ENCODE measurements at regions of chr2 and their contacts with region 1.

Region 1: GRCh38 chr2:152717228-152718075 is at the start of gene PRPF40A:
- DNase-seq: peak; percentile 98
- H3K4me3 Mint-ChIP-seq: peak within 1 kb of the TSS; percentile 100
- H3K27ac Mint-ChIP-seq: peak within 1 kb of the TSS; percentile 97
- H3K4me1 Mint-ChIP-seq: peaks cover 56% of the 10 kb centered on the region
- H3K27me3 Mint-ChIP-seq: peaks cover 1% of the 10 kb centered on the region
- total RNA-seq, gene PRPF40A: 152 and 172 TPM in 2 replicates

Region 2: DNA sequence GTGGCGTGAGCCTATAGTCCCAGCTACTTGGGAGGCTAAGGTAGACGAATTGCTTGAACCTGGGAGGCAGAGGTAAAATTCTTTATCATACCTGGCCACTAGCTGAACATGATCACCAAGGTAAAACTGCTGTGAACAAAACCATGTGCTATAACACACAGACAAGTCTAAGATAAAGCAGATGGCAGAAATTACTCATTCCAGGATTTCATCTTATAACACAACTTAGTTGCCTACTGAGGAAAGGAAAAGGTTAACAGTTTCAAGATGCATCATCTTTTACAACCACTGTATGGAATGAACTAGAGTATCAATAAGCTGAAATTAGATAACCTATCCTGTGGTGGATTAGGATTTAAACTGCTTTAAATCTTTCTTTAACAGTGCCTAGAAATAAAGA is 897.5 kb before region 1 on chr2:
- intact Hi-C with region 1: loop called (anchors 2 kb)
- DNase-seq: no peak
- H3K4me3 Mint-ChIP-seq: no peak overlapping the region
- H3K27ac Mint-ChIP-seq: peak overlapping the region; percentile 68
- H3K4me1 Mint-ChIP-seq: peaks cover 51% of the 10 kb centered on the region
- H3K27me3 Mint-ChIP-seq: no peaks in the 10 kb centered on the region

Region 3: DNA sequence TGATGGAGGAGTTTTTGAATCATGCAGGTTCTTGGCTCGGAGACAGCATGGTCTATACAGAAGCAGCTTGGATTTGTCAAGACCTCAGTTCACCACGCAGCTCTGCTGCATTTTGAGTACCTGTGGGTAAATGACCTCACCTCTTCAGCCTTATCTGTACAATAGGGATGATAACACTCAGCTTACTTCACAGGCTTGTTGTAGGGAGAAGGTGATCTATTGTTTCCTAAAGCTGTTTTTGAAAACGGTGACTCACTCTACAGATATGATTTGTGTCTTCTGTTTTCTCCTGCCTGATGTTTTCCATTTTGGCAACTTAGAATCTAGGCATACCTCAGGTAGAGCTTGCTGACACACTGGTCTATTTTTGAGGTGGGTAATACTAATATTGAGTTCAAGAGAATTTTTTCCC is 302.2 kb before region 1 on chr2:
- intact Hi-C with region 1: loop called (anchors 2 kb)
- DNase-seq: no peak
- H3K4me3 Mint-ChIP-seq: peak overlapping the region; percentile 16
- H3K27ac Mint-ChIP-seq: peak overlapping the region; percentile 77
- H3K4me1 Mint-ChIP-seq: peaks cover 41% of the 10 kb centered on the region
- H3K27me3 Mint-ChIP-seq: no peaks in the 10 kb centered on the region

Region 4: DNA sequence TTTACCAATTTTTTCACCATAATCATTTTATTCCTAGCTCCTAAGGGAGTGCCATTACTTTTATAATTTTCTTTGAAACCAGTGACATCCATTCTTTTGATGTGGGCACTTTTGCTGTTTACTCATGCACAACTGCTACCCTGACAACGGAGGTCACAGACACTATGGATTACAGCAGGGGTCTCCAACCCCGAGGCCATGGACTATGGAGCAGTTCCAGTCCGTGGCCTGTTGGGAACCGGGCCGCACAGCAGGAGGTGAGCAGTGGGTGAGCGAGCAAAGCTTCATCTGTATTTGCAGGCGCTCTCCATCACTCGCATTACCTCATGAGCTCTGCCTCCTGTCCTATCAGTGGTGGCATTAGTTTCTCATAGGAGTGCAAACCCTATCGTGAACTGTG is 34.8 kb before region 1 on chr2:
- intact Hi-C with region 1: loop called (anchors 5 kb)
- DNase-seq: no peak
- H3K4me3 Mint-ChIP-seq: no peak overlapping the region
- H3K27ac Mint-ChIP-seq: no peak overlapping the region
- H3K4me1 Mint-ChIP-seq: peaks cover 31% of the 10 kb centered on the region
- H3K27me3 Mint-ChIP-seq: no peaks in the 10 kb centered on the region

Region 5: GRCh38 chr2:152730591-152731303 is 13.3 kb after region 1 on chr2:
- intact Hi-C with region 1: loop called (anchors 1 kb)
- DNase-seq: peak; percentile 29
- H3K4me3 Mint-ChIP-seq: peak overlapping the region; percentile 6
- H3K27ac Mint-ChIP-seq: no peak overlapping the region
- H3K4me1 Mint-ChIP-seq: peaks cover 28% of the 10 kb centered on the region
- H3K27me3 Mint-ChIP-seq: no peaks in the 10 kb centered on the region

Region 6: DNA sequence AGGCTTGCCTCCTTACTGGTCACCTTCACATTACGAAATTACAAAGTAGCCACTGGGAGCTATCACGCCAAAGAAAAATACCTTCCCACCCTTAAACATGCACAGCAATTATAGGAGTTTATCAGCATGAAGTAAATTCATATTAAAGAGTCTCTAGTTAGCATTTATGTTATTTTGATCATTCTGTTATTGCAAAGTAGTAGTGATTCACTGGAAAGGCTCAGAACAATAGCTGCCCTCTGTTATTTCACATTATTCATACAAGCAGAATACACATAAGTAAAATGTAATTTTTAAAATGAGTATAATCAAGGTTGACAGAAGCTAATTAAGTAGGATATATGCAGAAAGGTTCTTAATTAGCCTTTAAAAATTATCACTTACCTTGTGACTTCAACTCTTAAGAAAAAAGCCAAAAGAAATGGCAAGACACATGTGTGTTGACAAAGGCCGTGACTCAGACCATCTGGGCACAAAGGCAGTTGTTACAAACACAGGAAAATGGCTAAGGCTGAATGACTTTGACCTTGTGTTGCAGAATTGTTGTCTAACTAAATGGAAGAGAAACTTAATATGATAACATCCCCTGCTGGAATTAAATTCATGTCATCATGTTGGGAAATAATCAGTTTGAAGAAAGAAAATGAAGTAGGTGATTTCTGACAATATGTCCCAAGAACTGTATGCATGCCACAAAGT is 109.3 kb after region 1 on chr2:
- intact Hi-C with region 1: no loop called
- DNase-seq: no peak
- H3K4me3 Mint-ChIP-seq: no peak overlapping the region
- H3K27ac Mint-ChIP-seq: no peak overlapping the region
- H3K4me1 Mint-ChIP-seq: no peaks in the 10 kb centered on the region
- H3K27me3 Mint-ChIP-seq: no peaks in the 10 kb centered on the region